ENCODE measurements at regions of chr6 and their contacts with region 1.

Region 1: GRCh38 chr6:26312501-26313390 is 52.3 kb upstream of the BTN3A2 start:
- DNase-seq: peak; percentile 91
- ATAC-seq: peak; percentile 70
- H3K4me3 ChIP-seq: peak overlapping the region; percentile 73
- H3K27ac ChIP-seq: peak overlapping the region; percentile 49
- H3K4me1 ChIP-seq: peaks cover 24% of the 10 kb centered on the region
- H3K27me3 ChIP-seq: no peaks in the 10 kb centered on the region
- CTCF ChIP-seq: no peak

Region 2: DNA sequence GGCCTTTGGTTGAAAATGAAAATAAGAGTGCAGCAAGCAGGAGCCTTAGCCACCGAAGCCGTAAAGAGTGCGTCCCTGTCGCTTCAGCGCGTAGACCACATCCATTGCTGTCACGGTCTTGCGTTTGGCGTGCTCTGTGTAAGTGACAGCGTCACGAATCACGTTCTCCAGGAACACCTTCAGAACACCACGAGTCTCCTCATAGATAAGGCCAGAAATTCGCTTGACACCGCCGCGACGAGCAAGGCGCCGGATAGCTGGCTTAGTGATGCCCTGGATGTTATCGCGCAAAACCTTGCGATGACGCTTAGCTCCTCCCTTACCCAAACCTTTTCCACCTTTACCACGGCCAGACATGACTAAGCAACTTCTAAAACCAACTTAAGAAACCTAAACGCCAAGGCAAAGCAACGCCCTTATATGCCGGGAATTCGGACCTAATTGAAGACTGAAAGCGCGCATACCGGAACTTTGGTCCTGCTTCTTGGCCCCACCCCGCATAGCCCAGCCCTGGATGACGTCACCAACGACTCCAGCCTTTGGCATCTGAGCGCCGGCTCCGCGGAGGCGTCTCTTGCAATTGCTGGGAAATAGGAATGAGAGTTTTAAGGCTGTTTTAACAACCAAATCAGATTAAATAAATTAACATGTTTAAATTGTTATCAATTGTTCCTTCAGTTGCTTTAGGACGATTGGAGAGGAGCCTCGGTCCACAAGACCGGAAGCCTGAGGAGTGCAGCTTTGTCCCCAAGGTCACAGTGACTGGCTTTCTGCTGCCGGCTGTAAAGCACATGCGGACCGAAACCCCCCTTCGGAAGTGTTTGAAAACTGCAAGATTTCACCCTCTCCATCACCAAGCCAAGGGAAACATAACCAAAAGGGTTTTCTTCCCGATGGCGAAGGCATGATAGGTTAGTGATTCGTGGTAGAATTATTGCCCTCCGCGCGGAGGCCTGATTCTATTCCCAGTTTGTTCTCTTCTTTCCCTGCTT is 27.3 kb before region 1 on chr6:
- CTCF ChIA-PET with region 1: no interaction called
- POLR2A ChIA-PET with region 1: interaction called, 6 read pairs
- intact Hi-C with region 1: loop called (anchors 1 kb)
- DNase-seq: peak; percentile 100
- ATAC-seq: peak; percentile 77
- H3K4me3 ChIP-seq: peak overlapping the region; percentile 92
- H3K27ac ChIP-seq: peak overlapping the region; percentile 94
- H3K4me1 ChIP-seq: peaks cover 19% of the 10 kb centered on the region
- H3K27me3 ChIP-seq: no peaks in the 10 kb centered on the region
- CTCF ChIP-seq: no peak

Region 3: GRCh38 chr6:26322645-26323482 is 10.1 kb after region 1 on chr6:
- CTCF ChIA-PET with region 1: no interaction called
- POLR2A ChIA-PET with region 1: no interaction called
- intact Hi-C with region 1: loop called (anchors 1 kb)
- DNase-seq: peak; percentile 96
- ATAC-seq: peak; percentile 79
- H3K4me3 ChIP-seq: peak overlapping the region; percentile 79
- H3K27ac ChIP-seq: peak overlapping the region; percentile 38; the same call in 1 of the 2 replicates
- H3K4me1 ChIP-seq: peaks cover 8% of the 10 kb centered on the region; the same call in 1 of the 2 replicates
- H3K27me3 ChIP-seq: no peaks in the 10 kb centered on the region
- CTCF ChIP-seq: no peak

Region 4: GRCh38 chr6:26329763-26330511 is 17.2 kb after region 1 on chr6:
- CTCF ChIA-PET with region 1: no interaction called
- POLR2A ChIA-PET with region 1: no interaction called
- intact Hi-C with region 1: loop called (anchors 1 kb)
- DNase-seq: peak; percentile 83
- ATAC-seq: peak; percentile 44
- H3K4me3 ChIP-seq: peak overlapping the region; percentile 86
- H3K27ac ChIP-seq: no peak overlapping the region
- H3K4me1 ChIP-seq: peaks cover 16% of the 10 kb centered on the region; the same call in 1 of the 2 replicates
- H3K27me3 ChIP-seq: no peaks in the 10 kb centered on the region
- CTCF ChIP-seq: no peak

Measured in PC-3 (cell line).